Activated CD4-positive, alpha-beta T cell treated with anti-CD3 and anti-CD28 coated beads, Interleukin-2, amount 10 ng/mL, durations not matched to agents 7 days and 5 days (primary cell): ENCODE measurements at regions of chr12 and their contacts with region 1.

Region 1: GRCh38 chr12:27331291-27331926 is 1.2 kb upstream of the BMAL2 start:
- DNase-seq: peak; percentile 23
- H3K4me3 Mint-ChIP-seq: peak overlapping the region; percentile 50
- H3K27ac Mint-ChIP-seq: peak overlapping the region; percentile 83
- H3K4me1 Mint-ChIP-seq: peaks cover 39% of the 10 kb centered on the region
- H3K27me3 Mint-ChIP-seq: peaks cover 12% of the 10 kb centered on the region

Region 2: DNA sequence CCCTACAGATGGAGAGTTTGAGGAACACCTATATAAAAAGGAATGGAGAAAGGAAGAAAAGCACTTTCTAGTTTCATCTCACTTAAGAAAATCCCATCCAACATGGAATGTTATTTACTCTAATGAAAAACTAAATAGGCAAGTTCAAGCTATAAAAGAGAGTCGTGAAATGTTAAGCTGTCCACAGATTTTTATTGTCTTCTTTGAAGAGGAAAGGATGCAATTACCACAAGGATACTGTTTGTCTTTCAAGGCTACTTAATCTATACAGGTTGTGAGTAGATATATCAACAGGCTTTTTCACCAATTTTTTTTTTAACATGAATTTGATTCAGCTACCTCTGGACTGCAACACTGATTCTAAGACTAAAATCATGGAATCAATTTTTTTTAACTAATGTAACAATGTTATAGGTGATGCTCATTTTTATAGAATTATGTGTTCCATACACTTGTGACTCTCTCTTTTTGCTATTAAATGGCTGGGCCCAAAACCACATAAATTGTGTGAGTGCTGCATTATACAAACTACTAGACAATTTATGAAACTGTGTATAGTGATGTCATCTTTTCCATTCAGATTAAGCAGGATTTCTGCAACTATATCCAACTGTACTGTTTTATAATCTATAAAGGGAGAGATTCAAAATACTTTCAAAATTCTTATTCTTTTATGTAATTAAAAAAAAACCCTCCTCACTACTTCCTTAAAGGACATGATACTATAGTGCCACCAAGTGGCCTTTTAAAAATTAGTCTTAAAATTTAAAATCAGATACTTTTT is 25.5 kb before region 1 on chr12:
- CTCF ChIA-PET with region 1: interaction called, 10 read pairs
- POLR2A ChIA-PET with region 1: interaction called, 3 read pairs
- DNase-seq: no peak
- H3K4me3 Mint-ChIP-seq: no peak overlapping the region
- H3K27ac Mint-ChIP-seq: no peak overlapping the region
- H3K4me1 Mint-ChIP-seq: peaks cover 17% of the 10 kb centered on the region
- H3K27me3 Mint-ChIP-seq: no peaks in the 10 kb centered on the region